Dorsolateral prefrontal cortex (tissue), 120 donors: ENCODE measurements at regions of chr15 and their contacts with region 1.

Region 1: GRCh38 chr15:43998607-43999006 is 171.8 kb downstream of the WDR76 start:
- DNase-seq: peak in 2 of 10 donors; percentile 32 to 50
- H3K4me3 ChIP-seq: peak overlapping the region in 10 of 59 donors; percentile 3 to 42 (median 13)
- H3K27ac ChIP-seq: peak overlapping the region in 49 of 59 donors; percentile 2 to 87 (median 53)
- H3K27me3 ChIP-seq: no peaks in the 10 kb centered on the region
- CTCF ChIP-seq: no peak

Region 2: GRCh38 chr15:43893956-43894355 is 104.7 kb before region 1 on chr15:
- intact Hi-C with region 1: no loop called
- DNase-seq: no peak
- H3K4me3 ChIP-seq: no peak overlapping the region
- H3K27ac ChIP-seq: peak overlapping the region in 22 of 59 donors; percentile 2 to 59 (median 34)
- H3K27me3 ChIP-seq: no peaks in the 10 kb centered on the region
- CTCF ChIP-seq: no peak

Region 3: GRCh38 chr15:43954181-43954621 is 44.4 kb before region 1 on chr15:
- intact Hi-C with region 1: loop called in 1 of 2 experiments (anchors 5 kb)
- DNase-seq: peak in 6 of 10 donors; percentile 46 to 78 (median 52)
- H3K4me3 ChIP-seq: no peak overlapping the region
- H3K27ac ChIP-seq: peak overlapping the region in 57 of 59 donors; percentile 2 to 94 (median 81)
- H3K27me3 ChIP-seq: no peaks in the 10 kb centered on the region
- CTCF ChIP-seq: no peak

Region 4: GRCh38 chr15:44414001-44414400 is 415.4 kb after region 1 on chr15:
- intact Hi-C with region 1: no loop called
- DNase-seq: no peak
- H3K4me3 ChIP-seq: no peak overlapping the region
- H3K27ac ChIP-seq: peak overlapping the region in 1 of 59 donors; percentile 23
- H3K27me3 ChIP-seq: no peaks in the 10 kb centered on the region
- CTCF ChIP-seq: no peak